Activated CD4-positive, alpha-beta T cell treated with anti-CD3 and anti-CD28 coated beads, Interleukin-2, amount 10 ng/mL, durations not matched to agents 7 days and 5 days (primary cell): ENCODE measurements at regions of chr2 and their contacts with region 1.

Region 1: GRCh38 chr2:169371180-169371579 is 8.8 kb upstream of the LRP2 start:
- DNase-seq: no peak
- H3K4me3 Mint-ChIP-seq: no peak overlapping the region
- H3K27ac Mint-ChIP-seq: no peak overlapping the region
- H3K4me1 Mint-ChIP-seq: no peaks in the 10 kb centered on the region
- H3K27me3 Mint-ChIP-seq: peaks cover 56% of the 10 kb centered on the region

Region 2: GRCh38 chr2:169388161-169388560 is 17.0 kb after region 1 on chr2:
- CTCF ChIA-PET with region 1: no interaction called
- POLR2A ChIA-PET with region 1: interaction called, 10 read pairs
- DNase-seq: no peak
- H3K4me3 Mint-ChIP-seq: no peak overlapping the region
- H3K27ac Mint-ChIP-seq: no peak overlapping the region
- H3K4me1 Mint-ChIP-seq: no peaks in the 10 kb centered on the region
- H3K27me3 Mint-ChIP-seq: peaks cover 45% of the 10 kb centered on the region

Region 3: DNA sequence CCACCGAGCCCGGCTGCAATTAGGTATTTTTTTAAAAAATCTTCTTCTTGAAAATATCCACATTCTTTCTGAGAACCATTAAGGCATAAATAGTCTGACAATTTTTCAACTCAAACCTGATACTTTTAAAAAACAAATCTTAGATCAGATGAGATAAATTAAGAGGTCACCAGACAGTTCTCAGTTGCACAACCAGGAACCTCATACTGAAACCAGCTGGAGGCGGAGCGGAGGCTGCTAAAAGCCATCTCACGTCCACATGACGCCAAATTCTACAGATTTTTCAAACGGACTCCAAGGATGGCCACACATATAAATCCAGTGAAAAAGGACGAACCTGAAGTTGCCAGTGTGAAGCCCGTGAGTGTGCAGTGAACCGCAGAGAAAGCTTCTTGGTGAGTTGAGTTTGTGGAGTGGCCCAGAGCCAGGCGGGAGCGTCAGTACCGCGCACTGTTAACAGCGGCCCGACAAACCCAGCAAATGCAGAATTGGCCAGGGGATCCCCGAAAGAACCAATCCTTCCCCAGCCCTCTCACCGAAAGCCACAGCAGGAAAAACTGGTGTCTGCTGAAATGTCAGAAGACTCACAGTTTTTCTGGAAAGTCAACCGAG is 55.0 kb after region 1 on chr2:
- CTCF ChIA-PET with region 1: no interaction called
- POLR2A ChIA-PET with region 1: no interaction called
- DNase-seq: no peak
- H3K4me3 Mint-ChIP-seq: no peak overlapping the region
- H3K27ac Mint-ChIP-seq: no peak overlapping the region
- H3K4me1 Mint-ChIP-seq: no peaks in the 10 kb centered on the region
- H3K27me3 Mint-ChIP-seq: peaks cover 16% of the 10 kb centered on the region